ENCODE measurements at regions of chr2 and their contacts with region 1.

Region 1: DNA sequence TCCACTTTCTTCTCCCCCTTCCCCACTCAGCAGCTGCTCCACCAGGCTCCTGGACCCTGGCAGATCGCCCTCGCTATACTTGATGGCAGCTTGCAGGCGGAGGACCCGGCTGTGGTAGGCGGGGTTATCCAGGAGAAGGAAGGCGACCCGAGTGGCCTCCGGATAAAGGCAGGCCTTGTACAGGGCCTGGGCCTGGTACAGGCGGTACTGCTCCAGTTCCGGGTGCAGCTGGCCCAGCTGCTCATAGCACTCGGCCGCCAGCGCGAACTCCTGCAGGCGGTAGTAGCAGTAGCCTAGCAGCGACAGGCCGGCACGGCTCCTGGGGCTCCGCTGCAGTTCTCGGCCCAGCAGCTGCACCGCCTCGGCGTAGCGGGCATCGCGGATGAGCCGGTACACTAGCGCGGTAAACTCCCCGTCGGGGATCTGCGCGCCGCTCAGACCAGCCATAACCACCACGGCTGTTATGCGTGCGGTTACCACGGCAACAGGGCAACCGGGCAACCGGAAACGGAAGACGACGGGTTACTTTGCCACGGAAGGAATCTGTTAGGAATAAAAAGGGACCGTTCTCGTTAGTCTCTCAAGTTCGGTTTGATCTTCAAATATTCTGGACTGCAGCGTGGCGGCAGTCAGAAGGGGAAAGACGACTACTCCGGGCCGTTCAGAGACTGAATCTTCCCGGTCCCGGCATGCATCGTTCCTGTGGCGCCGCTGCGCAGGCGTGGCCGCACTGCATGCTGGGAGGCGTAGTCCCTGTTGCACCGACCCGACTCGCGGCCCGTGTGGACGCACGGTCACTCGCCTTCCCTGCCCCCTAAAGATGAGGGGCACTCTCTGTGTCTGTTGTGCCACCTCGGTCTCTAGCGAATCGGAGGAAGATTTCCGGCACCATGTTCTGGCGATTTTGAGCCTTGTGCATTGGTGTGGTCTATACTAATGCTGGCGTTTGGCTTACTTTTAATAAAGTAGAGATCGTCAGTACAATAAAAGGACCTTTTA is 226.0 kb downstream of the AGPS start:
- DNase-seq: peak; percentile 85 to 87 (median 86)
- H3K4me3 ChIP-seq: peak overlapping the region; percentile 67 to 99 (median 86)
- H3K4me3 Mint-ChIP-seq: peak overlapping the region; percentile 84 to 97
- H3K27ac ChIP-seq: peak overlapping the region; percentile 73 to 98
- H3K27ac Mint-ChIP-seq: peak overlapping the region; percentile 97 to 100 (median 99)
- H3K4me1 ChIP-seq: peaks cover 10 to 12% of the 10 kb centered on the region in 2 donors
- H3K4me1 Mint-ChIP-seq: peaks cover 3% of the 10 kb centered on the region
- H3K27me3 ChIP-seq: no peaks in the 10 kb centered on the region
- H3K27me3 Mint-ChIP-seq: peaks cover 0 to 4% (median 0%) of the 10 kb centered on the region in 3 donors
- CTCF ChIP-seq: no peak

Region 2: GRCh38 chr2:177392373-177393202 is 226.0 kb before region 1 on chr2 and contains the start of gene AGPS:
- intact Hi-C with region 1: loop called in 1 of 2 experiments (anchors 10 kb)
- DNase-seq: peak; percentile 61 to 77 (median 67)
- H3K4me3 ChIP-seq: peak within 1 kb of the TSS; percentile 66 to 96 (median 85)
- H3K4me3 Mint-ChIP-seq: peak within 1 kb of the TSS; percentile 90 to 97
- H3K27ac ChIP-seq: peak within 1 kb of the TSS; percentile 46 to 92
- H3K27ac Mint-ChIP-seq: peak within 1 kb of the TSS; percentile 83 to 93 (median 87)
- H3K4me1 ChIP-seq: peaks cover 48 to 59% of the 10 kb centered on the region in 2 donors
- H3K4me1 Mint-ChIP-seq: peaks cover 66% of the 10 kb centered on the region
- H3K27me3 ChIP-seq: no peaks in the 10 kb centered on the region
- H3K27me3 Mint-ChIP-seq: peaks cover 0 to 1% (median 0%) of the 10 kb centered on the region in 3 donors
- CTCF ChIP-seq: peak; percentile 17
- polyA plus RNA-seq, gene AGPS: 7.1 to 26.9 (median 16.7) TPM

Region 3: DNA sequence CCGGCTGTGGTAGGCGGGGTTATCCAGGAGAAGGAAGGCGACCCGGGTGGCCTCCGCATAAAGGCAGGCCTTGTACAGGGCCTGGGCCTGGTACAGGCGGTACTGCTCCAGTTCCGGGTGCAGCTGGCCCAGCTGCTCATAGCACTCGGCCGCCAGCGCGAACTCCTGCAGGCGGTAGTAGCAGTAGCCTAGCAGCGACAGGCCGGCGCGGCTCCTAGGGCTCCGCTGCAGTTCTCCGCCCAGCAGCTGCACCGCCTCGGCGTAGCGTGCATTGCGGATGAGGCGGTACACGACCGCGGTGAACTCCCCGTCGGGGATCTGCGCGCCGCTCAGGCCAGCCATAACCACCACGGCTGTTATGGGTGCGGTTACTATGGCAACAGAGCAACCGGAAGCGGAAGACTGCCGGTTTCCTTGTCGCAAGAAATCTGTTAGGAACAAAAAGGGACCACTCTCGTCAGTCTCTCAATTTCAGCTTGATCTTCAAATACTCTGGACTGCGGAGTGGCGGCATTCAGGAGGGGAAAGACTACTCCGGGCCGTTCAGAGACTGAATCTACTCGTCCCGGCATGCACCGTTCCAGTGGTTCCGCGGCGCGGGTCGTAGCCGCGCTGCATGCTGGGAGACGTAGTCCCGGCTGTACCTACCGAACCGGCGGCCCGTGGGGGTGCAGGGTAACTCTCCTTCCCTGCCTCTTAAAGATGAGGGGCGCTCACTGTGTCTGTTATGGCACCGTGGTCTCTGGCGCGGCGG is 66.0 kb before region 1 on chr2:
- intact Hi-C with region 1: loop called (anchors 2 to 5 kb)
- DNase-seq: peak; percentile 92 to 94 (median 93)
- H3K4me3 ChIP-seq: peak overlapping the region; percentile 87 to 99 (median 98)
- H3K4me3 Mint-ChIP-seq: peak overlapping the region; percentile 92 to 97
- H3K27ac ChIP-seq: peak overlapping the region; percentile 93 to 97
- H3K27ac Mint-ChIP-seq: peak overlapping the region; percentile 99 to 100 (median 100)
- H3K4me1 ChIP-seq: peaks cover 10 to 12% of the 10 kb centered on the region in 2 donors
- H3K4me1 Mint-ChIP-seq: peaks cover 12% of the 10 kb centered on the region
- H3K27me3 ChIP-seq: no peaks in the 10 kb centered on the region
- H3K27me3 Mint-ChIP-seq: peaks cover 0 to 2% (median 0%) of the 10 kb centered on the region in 3 donors
- CTCF ChIP-seq: no peak

Region 4: GRCh38 chr2:177572236-177572671 is 46.3 kb before region 1 on chr2:
- intact Hi-C with region 1: no loop called
- DNase-seq: no peak
- H3K4me3 ChIP-seq: no peak overlapping the region
- H3K4me3 Mint-ChIP-seq: no peak overlapping the region
- H3K27ac ChIP-seq: no peak overlapping the region
- H3K27ac Mint-ChIP-seq: no peak overlapping the region
- H3K4me1 ChIP-seq: no peaks in the 10 kb centered on the region
- H3K4me1 Mint-ChIP-seq: no peaks in the 10 kb centered on the region
- H3K27me3 ChIP-seq: no peaks in the 10 kb centered on the region
- H3K27me3 Mint-ChIP-seq: peaks cover 0 to 7% (median 3%) of the 10 kb centered on the region in 3 donors
- CTCF ChIP-seq: no peak

Region 5: GRCh38 chr2:177660742-177661141 is 42.2 kb after region 1 on chr2:
- intact Hi-C with region 1: no loop called
- DNase-seq: no peak
- H3K4me3 ChIP-seq: no peak overlapping the region
- H3K4me3 Mint-ChIP-seq: no peak overlapping the region
- H3K27ac ChIP-seq: no peak overlapping the region
- H3K27ac Mint-ChIP-seq: no peak overlapping the region
- H3K4me1 ChIP-seq: no peaks in the 10 kb centered on the region
- H3K4me1 Mint-ChIP-seq: no peaks in the 10 kb centered on the region
- H3K27me3 ChIP-seq: no peaks in the 10 kb centered on the region
- H3K27me3 Mint-ChIP-seq: peaks cover 0 to 4% (median 2%) of the 10 kb centered on the region in 3 donors
- CTCF ChIP-seq: no peak

Region 6: DNA sequence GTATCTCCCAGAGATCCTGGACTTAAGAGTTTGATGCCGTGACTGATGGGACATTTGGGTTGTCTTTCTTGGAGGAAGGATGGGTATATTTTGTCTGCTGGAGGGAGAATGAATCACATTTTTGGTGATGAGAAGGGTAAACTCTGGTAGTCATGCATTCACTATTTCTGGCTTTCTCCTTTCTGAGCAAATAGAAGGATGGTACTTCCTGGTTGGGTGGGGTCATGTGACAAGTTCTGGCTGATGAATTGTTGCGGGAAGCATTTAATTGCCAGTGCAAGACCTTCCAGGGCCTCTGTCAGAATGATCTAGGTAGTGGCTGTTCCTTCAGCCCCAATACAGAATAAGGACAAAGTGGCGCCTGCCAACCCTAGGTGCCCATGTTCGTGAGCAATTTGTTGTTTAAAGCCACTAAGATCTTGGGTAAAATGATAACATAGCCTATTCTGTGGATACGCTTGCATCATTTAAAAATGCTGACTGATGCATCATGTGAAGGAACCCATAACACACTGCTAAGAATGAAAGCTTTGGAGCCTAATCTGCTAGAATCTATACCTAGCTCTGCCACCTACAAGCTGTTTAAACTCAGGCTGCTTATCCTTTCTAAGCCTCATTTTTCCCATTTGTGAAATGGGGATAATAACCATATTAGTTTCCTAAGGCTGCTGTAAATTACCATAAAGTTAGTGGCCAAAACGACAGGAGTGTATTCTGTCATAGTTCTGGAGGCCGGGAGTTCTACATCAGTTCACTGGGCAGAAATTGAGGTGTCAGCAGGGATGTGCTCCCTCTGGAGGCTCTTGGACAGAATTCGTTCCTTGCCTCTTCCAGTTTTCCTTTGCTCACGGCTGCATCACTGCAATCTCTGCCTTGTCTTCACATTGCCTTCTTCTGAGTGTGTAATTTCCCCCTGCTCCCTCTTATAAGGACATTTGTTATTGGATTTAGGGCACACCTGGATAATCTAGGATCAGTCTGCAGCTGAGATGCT is 55.3 kb after region 1 on chr2:
- intact Hi-C with region 1: no loop called
- DNase-seq: no peak
- H3K4me3 ChIP-seq: no peak overlapping the region
- H3K4me3 Mint-ChIP-seq: no peak overlapping the region
- H3K27ac ChIP-seq: no peak overlapping the region
- H3K27ac Mint-ChIP-seq: no peak overlapping the region
- H3K4me1 ChIP-seq: no peaks in the 10 kb centered on the region
- H3K4me1 Mint-ChIP-seq: no peaks in the 10 kb centered on the region
- H3K27me3 ChIP-seq: no peaks in the 10 kb centered on the region
- H3K27me3 Mint-ChIP-seq: peaks cover 0 to 4% (median 2%) of the 10 kb centered on the region in 3 donors
- CTCF ChIP-seq: no peak

Region 7: GRCh38 chr2:177763532-177764265 is 145.1 kb after region 1 on chr2:
- intact Hi-C with region 1: loop called in 1 of 2 experiments (anchors 10 kb)
- DNase-seq: peak; percentile 59 to 66 (median 64)
- H3K4me3 ChIP-seq: peak overlapping the region in 1 of 3 experiments; percentile 49
- H3K4me3 Mint-ChIP-seq: peak overlapping the region; percentile 54 to 67
- H3K27ac ChIP-seq: no peak overlapping the region
- H3K27ac Mint-ChIP-seq: peak overlapping the region in 1 of 7 donors; percentile 33
- H3K4me1 ChIP-seq: peaks cover 0 to 4% of the 10 kb centered on the region in 2 donors
- H3K4me1 Mint-ChIP-seq: peaks cover 6% of the 10 kb centered on the region
- H3K27me3 ChIP-seq: no peaks in the 10 kb centered on the region
- H3K27me3 Mint-ChIP-seq: peaks cover 3 to 6% (median 6%) of the 10 kb centered on the region in 3 donors
- CTCF ChIP-seq: peak; percentile 92

Measured in CD14-positive monocyte (primary cell).